Activated naive CD8-positive, alpha-beta T cell treated with anti-CD3 and anti-CD28 coated beads, Interleukin-2, amount 10 ng/mL, durations not matched to agents 7 days and 5 days (primary cell): ENCODE measurements at regions of chr1 and their contacts with region 1.

Region 1: GRCh38 chr1:31872658-31873636 is 57.1 kb upstream of the SPOCD1 start:
- DNase-seq: peak; percentile 40
- ATAC-seq: peak; percentile 87
- H3K4me3 Mint-ChIP-seq: peak overlapping the region; percentile 60
- H3K27ac Mint-ChIP-seq: peak overlapping the region; percentile 89
- H3K4me1 Mint-ChIP-seq: peaks cover 17% of the 10 kb centered on the region
- H3K27me3 Mint-ChIP-seq: no peaks in the 10 kb centered on the region

Region 2: DNA sequence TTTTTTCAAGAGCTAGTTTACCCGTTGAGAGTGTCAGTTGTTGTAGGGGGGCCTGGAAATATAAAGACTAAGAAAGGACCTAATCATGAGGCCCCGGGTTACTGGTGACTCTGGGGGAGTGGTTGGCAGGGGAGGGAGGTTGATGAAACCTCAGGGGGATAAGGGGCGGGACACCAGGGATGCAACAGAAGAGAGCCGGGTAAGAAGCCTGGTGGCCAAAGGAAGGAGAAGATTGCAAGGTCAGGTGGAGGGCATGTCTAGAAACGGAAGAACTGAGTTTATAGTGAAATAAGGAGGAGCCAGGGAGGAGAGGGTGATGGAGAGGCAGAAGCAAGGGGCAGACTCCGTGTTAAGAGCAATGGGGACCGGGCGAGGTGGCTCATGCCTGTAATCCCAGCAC is 44.6 kb before region 1 on chr1:
- POLR2A ChIA-PET with region 1: interaction called, 10 read pairs
- DNase-seq: no peak
- ATAC-seq: peak; percentile 23
- H3K4me3 Mint-ChIP-seq: peak overlapping the region; percentile 37
- H3K27ac Mint-ChIP-seq: peak overlapping the region; percentile 91
- H3K4me1 Mint-ChIP-seq: peaks cover 24% of the 10 kb centered on the region
- H3K27me3 Mint-ChIP-seq: no peaks in the 10 kb centered on the region

Region 3: DNA sequence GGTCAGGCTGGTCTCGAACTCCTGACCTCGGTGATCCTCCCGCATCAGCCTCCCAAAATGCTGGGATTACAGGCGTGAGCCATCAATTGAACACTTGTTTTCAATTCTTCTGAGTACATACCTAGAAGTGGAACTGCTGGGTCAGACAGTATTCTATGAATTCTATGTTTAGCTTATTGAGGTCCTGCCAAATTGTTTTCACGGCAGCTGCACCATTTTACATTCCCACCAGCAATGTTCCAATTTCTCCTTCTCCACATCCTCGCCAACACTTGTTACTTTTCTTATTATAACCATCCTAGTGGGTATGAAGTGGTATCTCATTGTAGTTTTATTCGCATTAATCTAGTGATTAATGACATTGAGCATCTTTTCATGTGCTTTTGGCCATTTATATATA is 15.3 kb after region 1 on chr1:
- POLR2A ChIA-PET with region 1: interaction called, 13 read pairs
- DNase-seq: no peak
- ATAC-seq: no peak
- H3K4me3 Mint-ChIP-seq: no peak overlapping the region
- H3K27ac Mint-ChIP-seq: peak overlapping the region; percentile 21
- H3K4me1 Mint-ChIP-seq: peaks cover 20% of the 10 kb centered on the region
- H3K27me3 Mint-ChIP-seq: no peaks in the 10 kb centered on the region

Region 4: GRCh38 chr1:31957701-31958674 is 85.0 kb after region 1 on chr1:
- POLR2A ChIA-PET with region 1: no interaction called
- DNase-seq: no peak
- ATAC-seq: peak; percentile 54
- H3K4me3 Mint-ChIP-seq: peak overlapping the region; percentile 56
- H3K27ac Mint-ChIP-seq: peak overlapping the region; percentile 90
- H3K4me1 Mint-ChIP-seq: peaks cover 59% of the 10 kb centered on the region
- H3K27me3 Mint-ChIP-seq: no peaks in the 10 kb centered on the region